Dendritic cell treated with granulocyte-macrophage colony-stimulating factor and Interleukin-4, amounts not matched to agents 40 ng/mL and 50 ng/mL, for 4 days (primary cell): ENCODE measurements at regions of chr7 and their contacts with region 1.

Region 1: DNA sequence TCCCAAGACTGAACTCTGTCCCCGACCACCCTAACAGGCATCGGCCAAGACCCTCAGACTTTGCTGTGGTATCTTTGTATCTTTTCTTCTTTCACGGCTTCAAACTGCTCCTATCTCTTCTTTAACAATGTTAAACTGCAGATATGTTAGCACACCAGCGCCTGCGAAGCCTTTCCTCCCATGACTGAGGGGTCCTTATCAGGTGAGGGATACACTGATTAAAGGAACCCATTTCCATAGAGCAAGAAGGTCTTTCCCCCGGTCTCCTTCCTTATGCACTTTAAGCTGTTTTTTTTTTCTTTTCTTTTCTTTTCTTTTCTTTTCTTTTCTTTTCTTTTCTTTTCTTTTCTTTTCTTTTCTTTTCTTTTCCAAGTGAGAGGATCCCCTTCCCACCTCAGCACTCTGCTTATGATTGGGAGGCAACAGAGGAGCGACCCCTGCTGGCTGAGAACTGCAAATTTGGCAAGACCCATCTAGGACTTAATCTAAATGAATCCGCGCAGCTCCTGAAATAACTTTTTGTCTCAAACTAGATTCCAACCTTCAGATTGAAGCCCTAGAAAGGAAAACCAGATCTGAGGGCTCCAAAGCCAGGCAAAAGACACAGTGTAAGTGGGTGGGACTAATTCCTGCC is 109.9 kb downstream of the ITGB8 start:
- H3K4me3 Mint-ChIP-seq: no peak overlapping the region
- H3K27ac Mint-ChIP-seq: peak overlapping the region; percentile 1
- H3K4me1 Mint-ChIP-seq: peaks cover 55% of the 10 kb centered on the region
- H3K27me3 Mint-ChIP-seq: peaks cover 8% of the 10 kb centered on the region

Region 2: DNA sequence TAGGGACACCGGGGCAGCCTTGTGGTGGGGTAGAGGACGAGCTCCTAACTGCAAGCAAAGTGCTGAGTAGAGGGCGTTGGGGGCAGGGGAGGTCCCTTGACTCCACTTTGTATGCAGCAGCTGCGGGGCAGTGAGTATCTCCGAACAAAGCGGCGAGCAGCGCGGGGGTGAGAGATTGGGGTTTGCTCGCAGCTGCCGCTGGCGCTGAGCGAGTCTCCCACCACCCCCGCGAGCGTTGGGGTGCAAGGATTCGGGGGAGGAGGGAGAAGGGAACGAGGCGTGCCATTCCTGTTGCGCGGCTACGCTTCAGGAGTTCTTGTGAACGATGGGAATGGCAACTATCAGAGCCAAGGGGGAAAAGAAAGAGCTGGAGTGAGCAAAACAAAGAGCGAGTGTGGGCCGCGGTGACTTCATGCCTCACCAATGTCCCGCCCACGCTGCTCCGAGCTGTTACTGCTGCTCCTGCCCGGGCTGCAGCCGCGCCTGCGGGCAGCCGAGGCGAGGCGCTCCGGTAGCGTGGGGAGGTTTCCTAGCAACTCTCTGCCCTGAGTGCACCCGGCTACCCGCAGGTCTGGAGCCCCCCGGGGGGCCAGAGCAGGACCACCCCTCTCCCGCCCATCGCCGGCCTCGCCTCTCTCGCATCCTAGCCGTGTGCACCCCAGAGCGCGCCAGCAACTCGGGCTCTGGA is 110.2 kb before region 1 on chr7 and contains the start of gene ITGB8:
- intact Hi-C with region 1: loop called (anchors 10 kb)
- H3K4me3 Mint-ChIP-seq: peak within 1 kb of the TSS; percentile 84
- H3K27ac Mint-ChIP-seq: peak within 1 kb of the TSS; percentile 80
- H3K4me1 Mint-ChIP-seq: peaks cover 25% of the 10 kb centered on the region
- H3K27me3 Mint-ChIP-seq: peaks cover 28% of the 10 kb centered on the region

Region 3: GRCh38 chr7:20475756-20476155 is 35.2 kb after region 1 on chr7:
- intact Hi-C with region 1: loop called (anchors 5 kb)
- H3K4me3 Mint-ChIP-seq: no peak overlapping the region
- H3K27ac Mint-ChIP-seq: no peak overlapping the region
- H3K4me1 Mint-ChIP-seq: peaks cover 42% of the 10 kb centered on the region
- H3K27me3 Mint-ChIP-seq: no peaks in the 10 kb centered on the region